Activated CD4-positive, alpha-beta T cell treated with anti-CD3 and anti-CD28 coated beads for 36 hours (primary cell): ENCODE measurements at regions of chr19 and their contacts with region 1.

Region 1: DNA sequence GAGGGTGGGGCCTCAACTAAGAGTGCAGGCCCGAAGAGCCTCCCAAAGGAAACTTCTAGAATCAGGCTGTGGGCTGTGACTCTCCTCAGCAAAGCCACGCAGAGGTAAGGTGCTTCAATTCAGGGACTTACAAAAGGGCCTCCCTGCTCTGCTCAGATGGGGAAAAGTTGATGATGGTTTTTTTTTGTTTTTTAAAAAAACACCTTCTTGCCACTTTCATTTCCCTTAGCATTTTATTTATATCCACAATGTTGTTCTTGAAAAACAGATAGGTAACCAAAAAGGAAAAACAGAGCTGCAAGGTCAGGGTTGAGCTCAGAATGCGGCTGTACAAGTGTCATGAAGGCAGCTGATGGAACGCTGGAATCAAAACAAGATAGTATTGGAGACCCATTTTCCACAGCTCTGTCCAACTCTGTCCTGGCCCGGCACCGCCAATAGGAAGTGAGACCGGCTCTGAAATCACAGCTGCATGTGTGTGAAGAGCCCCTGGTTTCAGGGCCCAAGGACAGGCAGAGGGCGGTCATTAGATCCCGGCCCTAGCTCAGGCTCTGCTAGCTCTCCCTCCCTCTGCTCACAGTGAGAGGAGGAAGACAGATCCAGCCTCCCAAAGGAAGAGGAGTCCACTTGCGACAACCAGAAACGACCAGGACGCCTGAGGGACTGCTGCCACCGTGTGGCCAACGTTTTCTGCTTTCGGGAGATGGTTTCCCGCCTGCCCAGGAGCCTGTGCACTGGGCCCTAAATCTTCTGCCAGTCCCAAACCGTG is 58.3 kb downstream of the KLF2 start:
- DNase-seq: peak; percentile 86
- ATAC-seq: peak; percentile 74
- H3K4me3 Mint-ChIP-seq: no peak overlapping the region
- H3K27ac Mint-ChIP-seq: peak overlapping the region; percentile 58
- H3K4me1 Mint-ChIP-seq: peaks cover 40% of the 10 kb centered on the region
- H3K27me3 Mint-ChIP-seq: no peaks in the 10 kb centered on the region

Region 2: GRCh38 chr19:15629003-15629880 is 753.7 kb before region 1 on chr19:
- CTCF ChIA-PET with region 1: no interaction called
- POLR2A ChIA-PET with region 1: no interaction called
- intact Hi-C with region 1: loop called in 1 of 2 experiments (anchors 10 kb)
- DNase-seq: peak; percentile 93
- ATAC-seq: peak; percentile 95
- H3K4me3 Mint-ChIP-seq: no peak overlapping the region
- H3K27ac Mint-ChIP-seq: no peak overlapping the region
- H3K4me1 Mint-ChIP-seq: peaks cover 3% of the 10 kb centered on the region
- H3K27me3 Mint-ChIP-seq: peaks cover 4% of the 10 kb centered on the region

Region 3: DNA sequence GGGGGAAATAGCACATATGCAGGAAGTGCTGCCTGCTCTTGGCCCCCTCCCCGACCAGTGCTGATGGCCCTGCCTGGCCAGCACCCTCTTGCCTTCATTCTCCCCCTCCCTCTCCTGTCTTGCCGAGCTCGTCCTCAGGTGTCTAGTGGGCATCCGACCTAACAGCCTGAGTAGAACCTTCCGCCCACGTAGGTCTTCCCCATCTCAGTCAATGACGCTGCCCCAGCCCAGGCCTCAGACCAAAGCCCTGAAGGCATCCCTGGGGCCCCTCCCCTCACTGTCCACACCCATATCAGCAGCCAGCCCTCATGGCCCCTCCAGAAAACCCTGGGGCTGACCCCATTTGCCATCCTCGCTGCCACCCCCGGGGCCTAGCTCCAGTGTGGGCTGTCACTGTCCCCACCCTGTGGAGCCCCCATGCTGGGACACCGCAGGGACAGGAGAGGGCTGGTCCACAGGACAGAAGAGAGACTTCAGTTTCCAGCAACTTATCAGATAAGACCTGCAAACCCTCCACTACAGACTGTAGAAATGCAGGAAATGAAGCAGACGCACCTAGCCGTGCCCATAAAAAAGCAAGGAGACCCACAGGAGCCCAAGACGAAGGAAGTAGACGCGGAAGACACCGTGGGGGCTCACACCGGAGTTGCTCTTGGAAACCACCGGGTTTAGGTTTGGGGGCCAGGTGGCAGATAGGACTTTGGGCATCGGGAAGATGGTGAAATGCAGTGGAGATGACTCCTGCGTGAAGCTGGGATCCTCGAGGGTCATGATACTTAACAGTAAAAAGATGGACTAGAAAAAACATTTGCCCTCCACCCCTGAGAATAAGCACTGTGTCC is 146.9 kb before region 1 on chr19:
- CTCF ChIA-PET with region 1: interaction called, 13 read pairs
- POLR2A ChIA-PET with region 1: no interaction called
- intact Hi-C with region 1: no loop called
- DNase-seq: no peak
- ATAC-seq: no peak
- H3K4me3 Mint-ChIP-seq: no peak overlapping the region
- H3K27ac Mint-ChIP-seq: no peak overlapping the region
- H3K4me1 Mint-ChIP-seq: peaks cover 17% of the 10 kb centered on the region
- H3K27me3 Mint-ChIP-seq: no peaks in the 10 kb centered on the region

Region 4: DNA sequence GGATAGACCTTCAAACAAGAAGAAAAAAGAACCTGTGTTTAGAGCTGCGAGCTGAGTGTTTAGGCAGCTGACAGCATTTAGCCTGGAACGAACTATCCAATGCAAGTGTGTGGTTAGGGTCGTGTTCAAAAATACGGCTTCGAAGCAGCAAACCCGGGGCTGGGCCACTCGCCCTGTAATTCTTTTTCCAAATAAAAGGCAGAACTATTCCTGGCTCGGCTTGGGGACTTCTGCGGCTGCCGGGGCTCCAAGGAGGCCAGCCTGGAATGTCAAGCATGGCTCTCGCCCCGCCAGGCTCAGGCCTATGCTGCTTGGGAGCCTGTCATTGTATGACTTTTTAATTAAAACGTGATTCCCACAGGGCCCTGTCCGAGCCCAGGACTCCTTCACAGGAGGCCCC is 110.0 kb before region 1 on chr19:
- CTCF ChIA-PET with region 1: interaction called, 14 read pairs
- POLR2A ChIA-PET with region 1: interaction called, 4 read pairs
- intact Hi-C with region 1: no loop called
- DNase-seq: no peak
- ATAC-seq: no peak
- H3K4me3 Mint-ChIP-seq: no peak overlapping the region
- H3K27ac Mint-ChIP-seq: no peak overlapping the region
- H3K4me1 Mint-ChIP-seq: peaks cover 9% of the 10 kb centered on the region
- H3K27me3 Mint-ChIP-seq: peaks cover 5% of the 10 kb centered on the region

Region 5: GRCh38 chr19:16371540-16371986 is 11.4 kb before region 1 on chr19:
- CTCF ChIA-PET with region 1: interaction called, 18 read pairs
- POLR2A ChIA-PET with region 1: no interaction called
- intact Hi-C with region 1: no loop called
- DNase-seq: peak; percentile 92
- ATAC-seq: peak; percentile 82
- H3K4me3 Mint-ChIP-seq: peak overlapping the region; percentile 22
- H3K27ac Mint-ChIP-seq: peak overlapping the region; percentile 76
- H3K4me1 Mint-ChIP-seq: peaks cover 46% of the 10 kb centered on the region
- H3K27me3 Mint-ChIP-seq: peaks cover 14% of the 10 kb centered on the region